Posterior cingulate gyrus (tissue), 11 donors: ENCODE measurements at regions of chrX and their contacts with region 1.

Region 1: GRCh38 chrX:115650916-115651315 is 89.9 kb downstream of the PLS3 start:
- DNase-seq: peak in 7 of 10 donors; percentile 12 to 88 (median 34)

Region 2: DNA sequence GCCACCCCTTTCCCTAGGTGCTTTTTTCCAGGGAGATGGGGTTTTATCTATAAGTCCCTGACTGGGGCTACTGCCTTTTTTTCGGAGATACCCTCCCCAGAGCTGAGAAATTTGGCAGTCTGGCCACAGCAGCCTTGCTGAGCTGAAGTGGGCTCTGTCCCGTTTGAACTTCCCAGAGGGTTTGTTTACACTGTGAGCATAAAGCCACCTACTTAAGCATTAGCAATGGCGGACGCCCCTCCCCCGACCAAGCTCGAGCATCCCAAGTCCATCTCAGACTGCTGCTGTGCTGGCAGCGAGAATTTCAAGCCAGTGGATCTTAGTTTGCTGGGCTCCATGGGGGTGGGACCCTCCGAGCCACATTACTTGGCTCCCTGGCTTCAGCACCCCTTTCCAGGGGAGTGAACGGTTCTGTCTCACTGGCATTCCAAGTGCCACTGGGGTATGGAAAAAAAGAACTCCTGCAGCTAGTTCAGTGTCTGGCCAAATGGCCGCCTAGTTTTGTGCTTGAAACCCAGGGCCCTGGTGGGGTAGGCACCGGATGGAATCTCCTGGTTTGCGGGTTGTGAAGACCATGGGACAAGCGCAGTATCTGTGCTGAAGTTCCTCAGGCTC is 1523.4 kb before region 1 on chrX:
- intact Hi-C with region 1: no loop called
- DNase-seq: peak in 3 of 10 donors; percentile 27 to 55 (median 51)

Region 3: DNA sequence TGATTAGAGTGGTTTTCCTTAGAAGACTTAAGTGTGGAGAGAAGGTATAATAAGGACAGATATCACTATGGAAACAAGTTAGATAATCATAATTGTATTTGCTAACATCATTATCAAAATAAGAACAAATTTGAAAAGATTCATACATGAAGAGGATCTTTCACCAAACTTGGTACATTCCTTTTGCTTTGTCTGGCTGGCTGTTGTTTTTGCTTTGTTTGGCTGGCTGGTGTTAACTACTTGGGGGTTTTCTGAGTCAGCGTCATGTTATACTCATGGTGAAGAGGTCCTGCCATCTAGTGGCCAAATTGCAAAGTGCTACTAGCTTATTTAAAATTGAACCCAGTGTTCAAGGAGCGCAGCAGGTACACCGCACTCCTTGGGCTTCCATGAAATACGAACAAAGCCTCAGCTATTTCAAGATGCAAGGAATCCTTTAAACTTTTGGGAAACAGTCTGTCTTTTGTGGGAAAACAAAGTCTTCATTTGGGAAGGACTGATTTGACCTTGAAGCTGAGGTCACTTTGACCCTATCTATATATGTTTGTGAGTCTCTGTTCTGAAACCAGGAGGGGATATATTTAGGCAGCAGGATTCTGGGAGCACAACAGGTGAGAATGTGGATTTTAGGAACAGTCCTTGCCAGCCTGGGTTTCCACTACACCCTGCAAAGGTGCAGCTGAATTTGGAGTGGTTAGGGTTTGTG is 39.7 kb after region 1 on chrX:
- intact Hi-C with region 1: loop called (anchors 5 kb)
- DNase-seq: peak in 5 of 10 donors; percentile 4 to 41 (median 17)